ENCODE measurements at regions of chr14 and their contacts with region 1.

Region 1: GRCh38 chr14:94485944-94486841 is 10.2 kb upstream of the SERPINA9 start:
- DNase-seq: peak; percentile 85

Region 2: DNA sequence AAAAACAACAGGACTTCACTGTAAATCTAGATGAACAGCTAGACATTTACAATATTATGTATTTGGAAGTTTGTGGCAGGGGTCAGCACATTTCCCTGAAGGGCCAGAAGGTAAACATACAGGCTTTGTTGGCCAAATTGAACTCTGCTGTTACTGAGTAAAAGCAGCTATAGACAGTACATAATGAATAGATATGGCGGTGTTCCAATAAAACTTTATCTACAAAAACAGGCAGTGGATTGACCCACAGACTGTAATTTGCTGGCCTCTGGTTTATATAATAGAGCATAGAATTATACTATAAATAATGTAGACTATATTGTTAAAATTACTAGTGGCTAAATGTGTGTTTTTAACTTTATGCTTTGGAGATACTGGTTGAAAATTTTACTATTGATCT is 218.8 kb before region 1 on chr14:
- CTCF ChIA-PET with region 1: no interaction called
- POLR2A ChIA-PET with region 1: no interaction called
- DNase-seq: no peak

Region 3: DNA sequence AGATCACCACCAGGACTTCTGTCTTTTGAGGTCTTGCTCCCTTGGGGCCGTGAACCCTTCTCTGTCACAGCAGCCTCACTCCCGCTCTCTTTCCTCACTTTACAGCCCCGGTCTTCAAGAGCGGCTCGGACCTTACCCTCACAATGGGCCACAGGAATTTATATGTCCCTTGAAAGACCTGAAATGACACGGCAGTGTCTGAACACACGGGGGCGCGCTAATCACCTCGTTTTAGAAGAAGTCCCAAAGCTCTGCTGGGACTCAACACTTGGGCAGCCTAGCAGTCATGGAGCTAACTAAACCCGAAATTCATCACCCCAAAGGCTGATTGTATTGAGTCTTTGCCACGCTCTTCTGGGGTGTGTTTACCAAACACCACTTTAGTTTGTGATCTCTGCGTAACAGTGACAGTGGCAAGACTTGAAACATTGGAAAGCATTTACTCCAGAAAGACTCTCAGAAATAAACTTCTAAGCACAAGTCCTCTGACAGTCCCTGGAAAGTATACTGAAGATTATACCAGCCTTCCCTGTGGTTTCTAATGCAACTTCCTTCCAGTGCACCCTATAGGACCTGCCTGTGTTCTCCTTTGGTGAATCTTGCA is 62.6 kb before region 1 on chr14:
- CTCF ChIA-PET with region 1: interaction called, 16 read pairs
- POLR2A ChIA-PET with region 1: no interaction called
- DNase-seq: peak; percentile 78

Region 4: DNA sequence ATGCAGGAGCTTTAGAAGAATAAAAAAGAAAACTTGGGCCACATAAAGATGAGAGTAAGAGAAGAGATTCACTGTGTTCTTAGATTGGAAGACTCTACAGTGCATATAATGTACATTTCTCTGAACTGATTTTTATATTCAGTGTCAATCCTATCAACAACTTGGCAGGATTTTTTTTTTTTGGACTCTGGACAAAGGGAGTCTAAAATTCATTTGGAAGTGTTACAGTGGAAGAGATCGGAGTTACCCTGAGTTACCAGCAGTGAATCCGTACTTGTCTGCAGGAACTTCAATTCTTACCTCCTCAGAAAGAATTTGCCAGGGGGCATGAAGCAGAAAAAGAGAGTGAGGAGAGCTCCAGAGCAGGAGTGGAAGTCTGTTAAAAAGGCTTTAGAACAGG is 57.6 kb before region 1 on chr14:
- CTCF ChIA-PET with region 1: interaction called, 16 read pairs
- POLR2A ChIA-PET with region 1: no interaction called
- DNase-seq: no peak

Region 5: DNA sequence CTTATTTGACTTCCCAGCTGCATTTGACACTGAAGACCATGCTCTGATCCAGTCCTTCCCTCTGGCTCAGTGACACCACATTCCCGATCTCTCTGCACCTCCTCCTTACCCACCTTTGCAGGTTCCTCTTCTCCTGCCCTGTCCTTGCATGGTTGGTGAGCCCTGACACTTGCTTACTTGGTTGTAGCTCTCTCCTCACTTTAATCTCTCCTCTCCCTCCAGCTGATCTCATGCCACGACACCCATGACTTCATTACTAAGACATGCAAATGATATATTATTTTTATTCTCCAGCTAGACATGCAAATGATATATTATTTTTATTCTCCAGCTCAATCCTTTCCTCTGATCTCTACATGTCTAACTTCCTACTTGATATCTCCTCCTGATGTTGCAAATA is 10.2 kb before region 1 on chr14 and contains the start of gene SERPINA9:
- CTCF ChIA-PET with region 1: interaction called, 12 read pairs
- POLR2A ChIA-PET with region 1: no interaction called
- DNase-seq: no peak